Activated CD4-positive, alpha-beta T cell treated with anti-CD3 and anti-CD28 coated beads for 36 hours (primary cell): ENCODE measurements at regions of chr14 and their contacts with region 1.

Region 1: DNA sequence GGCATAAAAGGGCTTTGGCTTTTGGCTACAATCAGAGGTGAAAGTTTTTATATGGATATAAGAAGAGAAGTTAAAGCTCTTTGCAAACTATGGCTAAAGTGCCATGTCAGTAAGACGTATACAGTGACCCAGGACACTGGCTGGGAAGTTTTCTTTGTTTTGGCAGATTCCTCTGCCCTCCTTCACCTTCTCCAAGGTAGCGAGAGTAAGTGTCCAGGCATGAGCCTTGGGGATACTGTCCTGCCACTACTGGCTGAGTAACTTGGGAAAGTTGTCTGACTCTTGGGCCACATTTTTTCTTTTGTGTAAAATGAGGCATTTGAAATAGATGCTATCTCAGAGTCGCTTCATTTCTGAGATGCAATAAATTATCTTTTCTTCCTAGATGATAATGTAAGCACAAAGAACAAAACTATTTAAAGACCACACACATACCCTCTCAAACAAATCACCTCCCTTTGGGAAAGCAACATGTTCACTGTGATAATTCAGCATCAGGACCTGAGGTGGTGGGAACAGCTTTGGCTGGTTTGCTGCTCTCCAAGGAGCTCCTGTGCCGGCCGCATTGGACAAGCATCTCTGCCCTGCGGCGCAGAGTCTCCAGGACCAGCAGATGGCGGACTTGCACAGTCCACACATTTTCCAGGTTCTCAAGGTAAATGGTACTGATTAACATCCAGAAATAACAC is 106.3 kb downstream of the PTCSC3 start:
- DNase-seq: peak; percentile 75
- ATAC-seq: peak; percentile 74
- H3K4me3 Mint-ChIP-seq: no peak overlapping the region
- H3K27ac Mint-ChIP-seq: no peak overlapping the region
- H3K4me1 Mint-ChIP-seq: no peaks in the 10 kb centered on the region
- H3K27me3 Mint-ChIP-seq: peaks cover 19% of the 10 kb centered on the region

Region 2: GRCh38 chr14:35534862-35535482 is 535.2 kb before region 1 on chr14:
- CTCF ChIA-PET with region 1: no interaction called
- POLR2A ChIA-PET with region 1: no interaction called
- intact Hi-C with region 1: no loop called
- DNase-seq: peak; percentile 82
- ATAC-seq: peak; percentile 80
- H3K4me3 Mint-ChIP-seq: peak overlapping the region; percentile 69
- H3K27ac Mint-ChIP-seq: no peak overlapping the region
- H3K4me1 Mint-ChIP-seq: peaks cover 15% of the 10 kb centered on the region
- H3K27me3 Mint-ChIP-seq: peaks cover 34% of the 10 kb centered on the region

Region 3: GRCh38 chr14:35878272-35879150 is 191.7 kb before region 1 on chr14:
- CTCF ChIA-PET with region 1: interaction called, 41 read pairs
- POLR2A ChIA-PET with region 1: no interaction called
- intact Hi-C with region 1: loop called (anchors 1 kb)
- DNase-seq: no peak
- ATAC-seq: no peak
- H3K4me3 Mint-ChIP-seq: no peak overlapping the region
- H3K27ac Mint-ChIP-seq: no peak overlapping the region
- H3K4me1 Mint-ChIP-seq: no peaks in the 10 kb centered on the region
- H3K27me3 Mint-ChIP-seq: no peaks in the 10 kb centered on the region

Region 4: DNA sequence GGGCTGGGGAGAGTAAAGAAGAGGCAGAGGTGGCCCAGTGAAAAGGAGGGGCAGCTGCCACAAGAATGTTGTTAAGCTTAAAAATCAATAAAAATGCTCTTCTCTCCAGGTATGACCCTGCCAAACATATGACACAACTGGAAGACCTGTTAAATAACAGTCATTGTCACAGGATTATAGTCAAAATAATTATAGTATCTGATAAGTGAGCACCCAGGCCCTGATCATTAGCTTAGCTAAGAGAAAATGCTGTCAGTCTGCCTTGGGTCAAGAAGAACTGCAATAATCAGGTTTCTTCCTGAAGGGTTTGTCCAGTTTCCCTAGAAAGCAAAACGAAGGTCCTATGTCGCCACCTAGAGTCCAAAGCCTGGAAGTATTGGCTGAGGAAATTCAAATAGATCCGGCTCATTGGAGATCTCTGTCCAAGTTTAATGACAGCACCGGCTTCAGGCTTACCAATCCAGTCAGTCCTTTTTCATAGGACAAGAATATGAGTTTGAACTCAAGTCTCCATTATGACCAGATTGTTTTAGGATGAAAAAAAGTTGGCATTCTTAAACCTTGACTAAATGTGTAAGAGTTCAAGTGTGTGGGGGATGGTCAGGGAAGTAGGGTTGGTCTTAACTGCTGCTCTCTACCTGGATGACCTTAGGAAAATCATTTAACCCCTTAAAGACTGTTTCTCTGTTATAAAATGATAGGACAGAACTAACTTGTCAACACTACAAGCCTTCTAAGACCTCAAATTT is 534.8 kb after region 1 on chr14:
- CTCF ChIA-PET with region 1: no interaction called
- POLR2A ChIA-PET with region 1: no interaction called
- intact Hi-C with region 1: loop called (anchors 1 to 10 kb)
- DNase-seq: peak; percentile 56
- ATAC-seq: peak; percentile 49
- H3K4me3 Mint-ChIP-seq: no peak overlapping the region
- H3K27ac Mint-ChIP-seq: no peak overlapping the region
- H3K4me1 Mint-ChIP-seq: no peaks in the 10 kb centered on the region
- H3K27me3 Mint-ChIP-seq: peaks cover 12% of the 10 kb centered on the region